Psoas muscle (tissue), 8 donors: ENCODE measurements at regions of chr22 and their contacts with region 1.

Region 1: DNA sequence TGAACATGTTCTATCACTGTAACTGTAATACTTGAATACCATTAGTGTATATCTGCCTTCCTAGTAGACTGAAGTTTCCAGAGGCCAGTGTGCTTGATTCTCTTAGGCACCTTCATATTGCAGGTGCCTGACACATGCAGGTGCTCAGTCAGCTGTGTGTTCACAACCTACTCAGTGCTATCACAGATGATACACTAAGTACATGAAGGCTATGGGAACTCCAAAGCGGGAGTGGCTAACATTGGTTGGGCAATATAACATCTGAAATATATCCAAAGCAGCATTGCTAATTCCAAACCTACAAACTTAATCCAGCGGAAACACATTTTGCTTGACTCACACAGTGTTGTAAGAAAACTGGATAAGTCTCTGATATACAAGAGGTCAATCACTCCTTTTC is 539.3 kb upstream of the ISX start:
- DNase-seq: no peak
- ATAC-seq: no peak
- H3K4me3 ChIP-seq: no peak overlapping the region
- H3K27ac ChIP-seq: no peak overlapping the region
- H3K4me1 ChIP-seq: no peaks in the 10 kb centered on the region
- H3K27me3 ChIP-seq: no peaks in the 10 kb centered on the region
- CTCF ChIP-seq: no peak

Region 2: DNA sequence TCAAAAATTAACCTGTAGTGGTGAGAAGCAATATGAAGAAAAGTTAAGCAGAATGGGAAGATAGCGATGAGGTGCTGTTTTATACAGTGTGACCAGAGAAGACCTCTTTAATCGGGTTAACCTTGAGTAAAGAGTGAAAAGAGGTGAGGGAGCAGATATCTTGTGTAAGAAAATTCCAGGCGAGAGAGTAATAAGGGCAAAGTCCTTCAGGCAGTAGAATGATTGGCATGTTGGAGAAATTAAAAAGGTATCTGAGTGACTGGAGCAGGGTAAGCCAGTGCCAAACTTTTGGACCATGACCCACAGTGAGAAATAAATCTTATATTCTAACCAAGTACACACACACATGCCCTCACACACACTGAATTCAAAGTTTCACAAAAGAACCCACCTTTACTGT is 231.7 kb before region 1 on chr22:
- intact Hi-C with region 1: no loop called
- DNase-seq: no peak
- ATAC-seq: no peak
- H3K4me3 ChIP-seq: no peak overlapping the region
- H3K27ac ChIP-seq: no peak overlapping the region
- H3K4me1 ChIP-seq: no peaks in the 10 kb centered on the region
- H3K27me3 ChIP-seq: peaks cover 0 to 6% (median 0%) of the 10 kb centered on the region in 3 donors
- CTCF ChIP-seq: no peak

Region 3: GRCh38 chr22:34380532-34380931 is 146.1 kb before region 1 on chr22:
- intact Hi-C with region 1: no loop called
- DNase-seq: no peak
- ATAC-seq: no peak
- H3K4me3 ChIP-seq: no peak overlapping the region
- H3K27ac ChIP-seq: no peak overlapping the region
- H3K4me1 ChIP-seq: no peaks in the 10 kb centered on the region
- H3K27me3 ChIP-seq: no peaks in the 10 kb centered on the region
- CTCF ChIP-seq: no peak

Region 4: GRCh38 chr22:34587831-34588251 is 61.2 kb after region 1 on chr22:
- intact Hi-C with region 1: loop called in 1 of 2 experiments (anchors 10 kb)
- DNase-seq: no peak
- ATAC-seq: no peak
- H3K4me3 ChIP-seq: no peak overlapping the region
- H3K27ac ChIP-seq: no peak overlapping the region
- H3K4me1 ChIP-seq: no peaks in the 10 kb centered on the region
- H3K27me3 ChIP-seq: peaks cover 0 to 3% (median 0%) of the 10 kb centered on the region in 3 donors
- CTCF ChIP-seq: no peak